PC-9 (cell line): ENCODE measurements at regions of chr9 and their contacts with region 1.

Region 1: GRCh38 chr9:69877854-69878514 is 57.4 kb downstream of the CFAP95 start:
- DNase-seq: peak in 1 of 2 experiments; percentile 37
- H3K4me3 ChIP-seq: no peak overlapping the region
- H3K27ac ChIP-seq: no peak overlapping the region
- H3K4me1 ChIP-seq: 0 out of 2 replicates have a peak, but pooled peaks cover 5% of the 10 kb centered on the region
- H3K27me3 ChIP-seq: no peaks in the 10 kb centered on the region
- CTCF ChIP-seq: peak; percentile 73

Region 2: GRCh38 chr9:69279084-69279729 is 598.8 kb before region 1 on chr9:
- CTCF ChIA-PET with region 1: no interaction called
- POLR2A ChIA-PET with region 1: no interaction called
- intact Hi-C with region 1: no loop called
- DNase-seq: no peak
- H3K4me3 ChIP-seq: no peak overlapping the region
- H3K27ac ChIP-seq: no peak overlapping the region
- H3K4me1 ChIP-seq: no peaks in the 10 kb centered on the region
- H3K27me3 ChIP-seq: no peaks in the 10 kb centered on the region
- CTCF ChIP-seq: no peak

Region 3: GRCh38 chr9:69421908-69422801 is 455.8 kb before region 1 on chr9:
- CTCF ChIA-PET with region 1: interaction called, 4 read pairs
- POLR2A ChIA-PET with region 1: no interaction called
- intact Hi-C with region 1: loop called (anchors 2 kb)
- DNase-seq: peak in 1 of 2 experiments; percentile 49
- H3K4me3 ChIP-seq: no peak overlapping the region
- H3K27ac ChIP-seq: no peak overlapping the region
- H3K4me1 ChIP-seq: no peaks in the 10 kb centered on the region
- H3K27me3 ChIP-seq: no peaks in the 10 kb centered on the region
- CTCF ChIP-seq: peak; percentile 93